ENCODE measurements at regions of chr15 and their contacts with region 1.

Region 1: DNA sequence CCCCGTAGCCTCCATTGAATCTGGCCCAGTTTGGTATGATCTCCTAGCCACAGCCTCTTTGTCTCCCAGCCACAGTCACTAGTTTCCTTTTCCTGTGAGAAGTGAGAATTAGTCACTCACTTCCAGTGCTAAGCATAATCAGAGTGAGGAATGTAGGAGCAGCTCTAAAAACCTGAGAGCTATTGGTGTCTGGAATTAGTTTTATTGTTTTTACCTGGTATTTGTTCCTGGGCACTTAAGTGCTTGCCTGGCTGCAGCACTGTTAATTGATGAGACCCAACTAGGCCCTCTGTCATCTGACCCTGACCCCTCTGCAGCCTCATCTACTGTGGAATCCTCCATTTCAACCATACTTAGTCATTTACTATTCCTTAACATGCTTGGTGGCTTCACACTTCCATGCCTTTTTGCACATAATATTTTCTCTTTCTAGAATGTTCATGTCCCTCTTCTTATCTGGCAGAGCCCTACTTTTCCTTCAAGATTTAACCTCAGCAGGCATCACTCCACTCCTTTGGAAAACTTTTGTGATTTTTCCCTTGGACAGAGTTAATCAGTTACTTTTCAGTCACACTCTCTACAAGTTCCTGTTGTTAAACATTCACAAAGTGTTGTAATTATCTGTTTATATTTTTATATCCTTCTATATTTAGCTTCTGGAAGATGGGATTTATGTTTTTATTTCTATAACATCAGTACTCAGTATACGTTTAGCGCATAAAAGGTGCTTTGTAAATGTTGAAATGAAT is 48.8 kb downstream of the PDE8A start:
- DNase-seq: peak; percentile 34
- H3K4me3 Mint-ChIP-seq: peak overlapping the region; percentile 0
- H3K27ac Mint-ChIP-seq: peak overlapping the region; percentile 4
- H3K4me1 Mint-ChIP-seq: peaks cover 59% of the 10 kb centered on the region
- H3K27me3 Mint-ChIP-seq: no peaks in the 10 kb centered on the region

Region 2: DNA sequence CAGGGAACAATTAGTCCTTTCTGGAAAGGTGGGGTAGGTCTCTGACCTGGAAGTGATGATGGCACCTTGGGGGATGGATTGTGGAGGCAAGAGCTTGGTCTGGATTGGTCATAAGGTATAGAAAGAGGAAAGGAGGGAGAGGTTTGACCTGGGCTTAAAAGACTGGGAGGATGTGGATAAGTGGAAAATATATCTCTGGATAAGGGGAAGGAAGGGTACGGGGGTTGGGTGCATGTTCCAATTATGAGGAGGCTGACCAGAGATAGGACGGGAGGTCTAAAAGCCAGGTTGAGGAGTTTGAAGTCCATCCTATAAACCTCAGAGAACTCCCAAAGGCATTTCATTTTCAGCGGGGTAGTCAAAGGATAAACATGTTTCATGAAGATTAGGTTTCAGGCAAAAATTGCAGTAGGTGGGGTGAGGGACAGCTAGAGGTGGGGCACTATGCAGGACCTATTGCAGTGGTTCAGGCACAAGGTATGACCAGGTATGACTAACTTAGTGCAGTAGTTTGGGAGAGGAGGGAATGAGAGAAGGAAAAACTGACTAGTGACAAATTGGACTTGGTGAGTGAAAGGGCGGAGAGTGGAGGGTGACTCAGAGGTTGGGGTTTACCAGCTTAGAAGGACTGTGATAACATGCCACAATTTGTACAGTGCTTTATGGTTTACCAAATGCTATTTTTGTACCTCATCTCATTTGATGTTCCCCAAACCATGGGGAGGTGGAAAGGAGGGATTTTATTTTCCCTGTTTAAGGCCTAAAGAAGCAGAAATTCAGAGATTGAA is 38.1 kb before region 1 on chr15:
- CTCF ChIA-PET with region 1: no interaction called
- POLR2A ChIA-PET with region 1: interaction called, 4 read pairs
- intact Hi-C with region 1: loop called (anchors 2 kb)
- DNase-seq: peak; percentile 74
- H3K4me3 Mint-ChIP-seq: no peak overlapping the region
- H3K27ac Mint-ChIP-seq: peak overlapping the region; percentile 62
- H3K4me1 Mint-ChIP-seq: peaks cover 54% of the 10 kb centered on the region
- H3K27me3 Mint-ChIP-seq: no peaks in the 10 kb centered on the region

Region 3: DNA sequence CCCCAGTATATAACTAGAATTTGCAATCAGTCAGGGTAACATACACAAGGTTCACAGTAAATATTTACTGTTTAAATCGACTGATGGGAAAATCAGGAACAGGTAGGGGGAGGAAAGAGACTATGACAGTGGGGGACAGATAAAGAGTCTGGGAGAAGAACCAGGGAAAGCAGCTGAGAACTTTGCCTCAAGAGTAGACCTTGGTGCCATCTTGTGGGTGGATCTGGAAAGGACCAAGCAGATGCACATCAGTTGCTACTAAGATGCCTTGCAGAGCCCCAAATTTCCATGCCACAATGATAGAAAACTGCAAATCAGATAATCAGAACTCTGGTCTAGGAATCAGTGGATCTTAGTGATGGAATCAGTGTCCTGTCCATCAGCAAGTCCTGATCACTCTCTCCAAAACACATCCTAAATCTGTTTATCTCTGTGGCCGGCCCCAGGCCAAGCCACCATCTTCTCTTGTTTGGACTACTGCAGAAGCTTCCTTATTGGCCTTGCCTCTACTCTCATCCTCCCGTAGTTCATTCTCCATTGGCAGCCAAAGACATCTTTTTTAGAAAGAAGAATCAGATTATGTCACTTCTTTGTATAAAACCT is 13.9 kb after region 1 on chr15:
- CTCF ChIA-PET with region 1: interaction called, 10 read pairs
- POLR2A ChIA-PET with region 1: no interaction called
- intact Hi-C with region 1: no loop called
- DNase-seq: peak; percentile 58
- H3K4me3 Mint-ChIP-seq: no peak overlapping the region
- H3K27ac Mint-ChIP-seq: no peak overlapping the region
- H3K4me1 Mint-ChIP-seq: peaks cover 14% of the 10 kb centered on the region
- H3K27me3 Mint-ChIP-seq: no peaks in the 10 kb centered on the region

Measured in activated CD4-positive, alpha-beta memory T cell treated with anti-CD3 and anti-CD28 coated beads for 36 hours (primary cell).